Gastrocnemius medialis (tissue), 4 donors: ENCODE measurements at regions of chr12 and their contacts with region 1.

Region 1: DNA sequence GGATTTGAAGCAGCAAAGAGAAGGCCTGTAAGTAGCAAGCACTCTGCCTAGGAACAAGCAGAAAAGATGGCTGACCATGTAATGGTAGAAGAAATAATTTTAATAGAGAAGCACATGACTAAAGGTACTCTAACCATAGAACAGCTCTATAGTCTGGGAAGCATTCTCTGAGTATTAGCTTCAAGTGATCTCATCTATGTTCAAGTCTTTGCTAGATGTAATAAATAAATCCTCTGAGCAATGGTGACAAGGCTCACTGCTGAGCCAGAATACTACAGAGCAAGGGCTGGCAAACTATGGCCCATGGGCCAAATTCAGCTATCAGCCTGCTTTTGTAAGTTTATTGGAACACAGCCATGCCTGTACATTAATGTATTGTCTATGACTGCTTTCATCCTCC is 84.8 kb downstream of the PEBP1 start:
- DNase-seq: no peak
- ATAC-seq: no peak
- H3K4me3 ChIP-seq: no peak overlapping the region
- H3K27ac ChIP-seq: no peak overlapping the region
- H3K4me1 ChIP-seq: no peaks in the 10 kb centered on the region
- H3K27me3 ChIP-seq: no peaks in the 10 kb centered on the region
- CTCF ChIP-seq: no peak
- POLR2A ChIP-seq: no peak

Region 2: DNA sequence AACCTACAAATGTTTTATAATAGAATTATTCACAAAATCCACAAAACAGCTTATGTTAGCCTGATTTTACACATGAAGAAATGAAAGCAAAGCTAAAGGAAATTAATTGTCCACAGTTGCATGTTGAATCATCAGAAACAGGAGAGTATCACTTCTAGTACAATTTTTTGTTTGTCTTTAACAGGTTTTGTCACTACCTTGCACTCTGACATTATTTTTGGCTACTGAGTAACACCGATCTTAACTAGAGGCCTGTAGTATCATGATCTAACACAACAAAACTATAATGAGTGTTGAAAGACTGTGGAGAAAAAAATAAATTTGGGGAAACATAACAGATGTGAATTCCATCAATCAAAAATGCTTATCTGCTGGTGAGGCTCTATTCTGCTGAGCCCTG is 91.9 kb after region 1 on chr12:
- in situ Hi-C with region 1: no loop called
- intact Hi-C with region 1: no loop called
- DNase-seq: no peak
- ATAC-seq: no peak
- H3K4me3 ChIP-seq: no peak overlapping the region
- H3K27ac ChIP-seq: no peak overlapping the region
- H3K4me1 ChIP-seq: peaks cover 8 to 13% of the 10 kb centered on the region in 2 donors
- H3K27me3 ChIP-seq: no peaks in the 10 kb centered on the region
- CTCF ChIP-seq: no peak
- POLR2A ChIP-seq: no peak

Region 3: GRCh38 chr12:118645219-118645618 is 424.5 kb after region 1 on chr12:
- in situ Hi-C with region 1: no loop called
- intact Hi-C with region 1: loop called (anchors 5 kb)
- DNase-seq: no peak
- ATAC-seq: no peak
- H3K4me3 ChIP-seq: no peak overlapping the region
- H3K27ac ChIP-seq: no peak overlapping the region
- H3K4me1 ChIP-seq: no peaks in the 10 kb centered on the region
- H3K27me3 ChIP-seq: no peaks in the 10 kb centered on the region
- CTCF ChIP-seq: no peak
- POLR2A ChIP-seq: no peak